ENCODE measurements at regions of chr17 and their contacts with region 1.

Region 1: GRCh38 chr17:82022981-82023374 is at the start of gene LRRC45:
- DNase-seq: peak; percentile 100
- H3K4me3 ChIP-seq: peak within 1 kb of the TSS; percentile 69 to 71
- H3K27ac ChIP-seq: peak within 1 kb of the TSS in 1 of 2 donors; percentile 36
- H3K4me1 ChIP-seq: peaks cover 19% of the 10 kb centered on the region
- H3K27me3 ChIP-seq: no peaks in the 10 kb centered on the region
- CTCF ChIP-seq: no peak
- POLR2A ChIP-seq: no peak
- total RNA-seq, gene LRRC45: 10.7 to 12.8 TPM

Region 2: DNA sequence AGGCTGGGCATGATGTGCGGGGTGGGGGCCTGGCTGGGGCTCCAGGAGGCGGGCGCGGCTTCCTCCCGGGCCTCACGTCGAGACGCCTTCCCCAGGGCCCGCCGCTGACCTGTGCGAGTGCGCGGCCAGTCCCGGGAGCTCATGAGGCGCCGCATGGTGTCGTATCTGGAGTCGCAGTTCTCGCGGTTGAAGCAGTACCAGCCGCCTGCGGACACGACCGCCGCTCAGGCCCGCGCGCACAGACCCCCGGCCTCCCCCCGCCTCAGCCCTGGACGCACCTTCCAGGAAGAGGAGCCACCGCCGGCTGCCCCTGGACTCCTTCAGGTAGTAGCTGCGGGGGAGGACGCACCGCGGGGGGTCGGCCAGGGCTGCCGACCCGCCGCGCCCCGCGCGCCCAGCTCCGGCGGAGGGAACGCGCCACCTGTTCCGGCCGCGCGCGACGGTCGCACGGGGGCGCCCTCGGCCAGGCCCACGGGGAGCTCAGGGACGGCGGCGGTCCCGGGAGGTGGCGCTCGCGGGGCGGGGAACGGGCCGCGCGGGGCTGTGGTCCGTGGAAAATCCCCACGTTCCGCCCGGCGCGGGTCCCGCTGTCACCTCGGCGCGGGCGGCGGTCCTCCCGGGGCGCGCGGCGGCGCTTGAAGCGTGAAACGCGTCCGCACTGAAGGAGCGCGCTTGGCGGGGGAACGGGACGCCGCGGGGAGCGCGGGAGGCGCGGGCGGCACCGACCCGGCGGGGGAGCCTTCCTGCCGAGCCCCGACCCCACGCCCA is 63.4 kb before region 1 on chr17:
- intact Hi-C with region 1: loop called (anchors 5 kb)
- DNase-seq: peak; percentile 63
- H3K4me3 ChIP-seq: peak overlapping the region; percentile 24 to 34
- H3K27ac ChIP-seq: no peak overlapping the region
- H3K4me1 ChIP-seq: no peaks in the 10 kb centered on the region
- H3K27me3 ChIP-seq: no peaks in the 10 kb centered on the region
- CTCF ChIP-seq: peak; percentile 60 to 87 (median 78)
- POLR2A ChIP-seq: no peak

Region 3: DNA sequence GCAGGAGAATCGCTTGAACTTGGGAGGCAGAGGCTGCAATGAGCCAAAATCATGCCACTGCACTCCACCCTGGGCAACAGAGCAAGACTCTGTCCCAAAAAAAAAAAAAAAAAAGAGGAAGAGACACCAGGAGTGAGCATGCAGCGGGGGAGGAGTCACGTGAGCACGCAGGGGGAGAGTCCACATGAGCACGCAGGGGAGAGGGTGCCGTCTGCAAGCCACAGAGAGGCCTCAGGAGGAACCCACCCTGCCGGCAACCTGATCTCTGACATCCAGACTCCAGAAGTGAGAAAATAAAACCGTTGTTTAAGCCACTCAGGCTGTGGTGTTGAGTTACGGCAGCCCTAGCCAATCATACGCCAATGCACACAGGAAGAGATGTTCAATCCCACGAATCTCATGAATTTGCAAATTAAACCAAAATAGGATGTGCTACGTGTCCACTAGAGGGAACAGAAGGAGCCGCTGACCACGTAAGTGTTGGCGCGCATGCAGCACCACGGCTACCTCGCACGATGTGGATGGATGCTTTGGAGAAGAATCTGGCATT is 147.5 kb after region 1 on chr17:
- intact Hi-C with region 1: no loop called
- DNase-seq: no peak
- H3K4me3 ChIP-seq: no peak overlapping the region
- H3K27ac ChIP-seq: no peak overlapping the region
- H3K4me1 ChIP-seq: no peaks in the 10 kb centered on the region
- H3K27me3 ChIP-seq: no peaks in the 10 kb centered on the region
- CTCF ChIP-seq: peak in 1 of 3 experiments; percentile 7
- POLR2A ChIP-seq: no peak